CD4-positive, alpha-beta memory T cell (primary cell): ENCODE measurements at regions of chr11 and their contacts with region 1.

Region 1: GRCh38 chr11:96342961-96343711 is at the start of gene MAML2:
- DNase-seq: peak; percentile 84 to 96 (median 89)
- H3K4me3 ChIP-seq: peak within 1 kb of the TSS; percentile 60 to 78
- H3K4me3 Mint-ChIP-seq: peak within 1 kb of the TSS; percentile 91 to 98 (median 94)
- H3K27ac ChIP-seq: peak within 1 kb of the TSS; percentile 75
- H3K27ac Mint-ChIP-seq: peak within 1 kb of the TSS; percentile 86 to 97 (median 96)
- H3K4me1 ChIP-seq: peaks cover 34% of the 10 kb centered on the region
- H3K4me1 Mint-ChIP-seq: peaks cover 23 to 46% (median 30%) of the 10 kb centered on the region in 4 donors
- H3K27me3 ChIP-seq: no peaks in the 10 kb centered on the region
- H3K27me3 Mint-ChIP-seq: no peaks in the 10 kb centered on the region
- total RNA-seq, gene MAML2: 37.5 to 38.3 TPM

Region 2: GRCh38 chr11:95150946-95151684 is 1192.0 kb before region 1 on chr11:
- CTCF ChIA-PET with region 1: interaction called, 5 read pairs
- POLR2A ChIA-PET with region 1: no interaction called
- intact Hi-C with region 1: loop called (anchors 1 kb)
- DNase-seq: peak; percentile 91 to 93 (median 91)
- H3K4me3 ChIP-seq: peak overlapping the region; percentile 45 to 87
- H3K4me3 Mint-ChIP-seq: peak overlapping the region; percentile 85 to 96 (median 90)
- H3K27ac ChIP-seq: peak overlapping the region; percentile 80
- H3K27ac Mint-ChIP-seq: peak overlapping the region; percentile 90 to 99 (median 97)
- H3K4me1 ChIP-seq: peaks cover 35% of the 10 kb centered on the region
- H3K4me1 Mint-ChIP-seq: peaks cover 26 to 44% (median 36%) of the 10 kb centered on the region in 4 donors
- H3K27me3 ChIP-seq: no peaks in the 10 kb centered on the region
- H3K27me3 Mint-ChIP-seq: peaks cover 2 to 8% of the 10 kb centered on the region in 2 donors

Region 3: GRCh38 chr11:96045622-96046456 is 297.3 kb before region 1 on chr11:
- CTCF ChIA-PET with region 1: interaction called, 258 read pairs
- POLR2A ChIA-PET with region 1: no interaction called
- intact Hi-C with region 1: no loop called
- DNase-seq: no peak
- H3K4me3 ChIP-seq: no peak overlapping the region
- H3K4me3 Mint-ChIP-seq: no peak overlapping the region
- H3K27ac ChIP-seq: no peak overlapping the region
- H3K27ac Mint-ChIP-seq: peak overlapping the region in 1 of 7 donors; percentile 10
- H3K4me1 ChIP-seq: no peaks in the 10 kb centered on the region
- H3K4me1 Mint-ChIP-seq: peaks cover 17 to 42% (median 20%) of the 10 kb centered on the region in 4 donors
- H3K27me3 ChIP-seq: no peaks in the 10 kb centered on the region
- H3K27me3 Mint-ChIP-seq: no peaks in the 10 kb centered on the region

Region 4: DNA sequence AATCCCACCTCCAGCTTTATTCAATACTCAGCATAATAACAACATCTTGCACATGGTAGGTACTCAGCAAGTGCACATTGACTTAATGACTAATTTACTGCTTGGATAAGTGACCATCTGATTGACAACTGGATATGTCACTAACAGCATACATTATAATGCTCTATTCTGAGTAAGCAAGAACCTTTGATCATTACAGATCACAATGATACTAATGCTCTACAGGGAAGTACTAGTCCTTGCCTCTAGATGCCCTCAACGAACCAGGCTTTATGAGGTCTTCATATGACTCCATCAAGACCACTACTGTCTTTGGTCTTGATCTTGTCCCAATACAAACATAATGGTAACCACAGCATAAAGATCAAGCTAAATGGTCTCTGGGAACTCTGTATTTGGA is 251.7 kb before region 1 on chr11:
- CTCF ChIA-PET with region 1: interaction called, 176 read pairs
- POLR2A ChIA-PET with region 1: interaction called, 37 read pairs
- intact Hi-C with region 1: loop called (anchors 1 kb)
- DNase-seq: peak; percentile 34 to 54 (median 43)
- H3K4me3 ChIP-seq: no peak overlapping the region
- H3K4me3 Mint-ChIP-seq: peak overlapping the region in 4 of 8 donors; percentile 24 to 75 (median 32)
- H3K27ac ChIP-seq: no peak overlapping the region
- H3K27ac Mint-ChIP-seq: peak overlapping the region in 3 of 7 donors; percentile 23 to 43 (median 40)
- H3K4me1 ChIP-seq: peaks cover 32% of the 10 kb centered on the region
- H3K4me1 Mint-ChIP-seq: peaks cover 32 to 79% (median 61%) of the 10 kb centered on the region in 4 donors
- H3K27me3 ChIP-seq: no peaks in the 10 kb centered on the region
- H3K27me3 Mint-ChIP-seq: no peaks in the 10 kb centered on the region

Region 5: DNA sequence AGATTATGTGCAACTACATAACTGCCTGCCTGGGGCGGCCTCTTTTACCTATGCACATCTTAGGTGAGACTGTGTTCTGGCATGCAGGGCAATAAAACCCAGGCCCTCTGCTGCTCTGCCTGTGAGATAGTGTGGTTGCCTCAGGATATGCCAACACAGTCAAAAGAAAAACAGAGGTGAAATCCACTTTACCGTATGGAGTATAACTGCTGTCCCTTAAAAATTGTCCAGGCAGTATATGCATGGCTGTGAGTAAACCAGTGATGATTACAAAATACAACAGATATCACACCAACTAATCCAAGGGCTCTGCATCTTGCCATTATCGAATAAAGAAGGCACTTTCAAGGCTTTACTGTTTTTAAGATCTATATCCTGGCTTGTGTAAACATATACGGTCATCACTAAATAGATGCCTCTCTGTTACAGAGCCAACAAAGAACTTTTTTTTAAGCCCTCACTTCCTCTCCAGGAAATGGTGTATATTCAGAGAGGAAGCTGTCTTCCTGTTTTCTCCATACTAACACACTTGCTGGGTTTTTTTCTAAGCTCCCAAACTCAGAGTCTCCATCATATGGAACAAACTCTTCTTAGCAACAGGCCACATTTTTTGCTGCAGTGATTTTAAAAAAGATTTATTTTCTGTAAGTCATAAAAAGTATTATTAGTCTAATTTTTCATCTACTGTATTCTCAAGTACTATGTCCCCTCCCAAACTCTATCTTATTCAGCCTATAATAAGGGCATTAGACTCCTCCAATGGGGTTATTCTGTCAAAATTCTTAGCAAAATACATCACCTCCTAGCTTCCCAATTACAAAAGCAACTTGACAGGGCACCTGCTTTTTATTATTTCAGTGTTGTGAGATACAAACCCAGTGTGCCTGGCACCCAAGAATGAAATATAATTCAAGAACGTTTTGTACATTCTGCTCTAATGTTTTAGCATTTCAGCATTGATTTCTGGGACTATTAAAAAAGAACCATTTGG is 135.4 kb before region 1 on chr11:
- CTCF ChIA-PET with region 1: interaction called, 41 read pairs
- POLR2A ChIA-PET with region 1: interaction called, 56 read pairs
- intact Hi-C with region 1: loop called (anchors 2 kb)
- DNase-seq: peak in 4 of 5 donors; percentile 52 to 62 (median 56)
- H3K4me3 ChIP-seq: peak overlapping the region in 1 of 2 donors; percentile 16
- H3K4me3 Mint-ChIP-seq: peak overlapping the region; percentile 31 to 89 (median 70)
- H3K27ac ChIP-seq: peak overlapping the region; percentile 39
- H3K27ac Mint-ChIP-seq: peak overlapping the region; percentile 80 to 97 (median 90)
- H3K4me1 ChIP-seq: peaks cover 97% of the 10 kb centered on the region
- H3K4me1 Mint-ChIP-seq: peaks cover 62 to 92% (median 79%) of the 10 kb centered on the region in 4 donors
- H3K27me3 ChIP-seq: no peaks in the 10 kb centered on the region
- H3K27me3 Mint-ChIP-seq: no peaks in the 10 kb centered on the region

Region 6: DNA sequence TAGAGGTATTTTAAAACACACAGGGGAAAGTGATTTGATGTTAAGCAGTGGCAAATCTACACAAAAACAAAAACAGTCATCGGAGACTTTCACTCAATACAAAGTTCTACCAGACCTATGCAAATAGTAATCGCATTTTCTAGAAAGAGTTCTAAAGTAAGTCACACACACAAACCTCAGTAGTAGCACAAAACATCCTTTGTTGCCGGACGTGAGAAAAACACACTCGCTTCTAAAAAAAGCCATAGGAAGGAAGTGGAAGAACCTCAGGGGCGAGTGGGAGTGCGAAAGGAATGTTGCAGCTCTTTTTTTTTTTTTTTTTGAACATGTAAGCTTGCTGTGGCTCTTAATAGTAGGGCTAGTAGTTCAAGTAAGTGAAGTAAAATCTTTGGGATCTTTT is 89.0 kb before region 1 on chr11:
- CTCF ChIA-PET with region 1: interaction called, 81 read pairs
- POLR2A ChIA-PET with region 1: interaction called, 76 read pairs
- intact Hi-C with region 1: loop called (anchors 1 kb)
- DNase-seq: peak; percentile 28 to 50 (median 47)
- H3K4me3 ChIP-seq: peak overlapping the region in 1 of 2 donors; percentile 36
- H3K4me3 Mint-ChIP-seq: peak overlapping the region; percentile 69 to 92 (median 84)
- H3K27ac ChIP-seq: peak overlapping the region; percentile 8
- H3K27ac Mint-ChIP-seq: peak overlapping the region; percentile 73 to 97 (median 91)
- H3K4me1 ChIP-seq: peaks cover 75% of the 10 kb centered on the region
- H3K4me1 Mint-ChIP-seq: peaks cover 68 to 94% (median 83%) of the 10 kb centered on the region in 4 donors
- H3K27me3 ChIP-seq: no peaks in the 10 kb centered on the region
- H3K27me3 Mint-ChIP-seq: no peaks in the 10 kb centered on the region

Region 7: DNA sequence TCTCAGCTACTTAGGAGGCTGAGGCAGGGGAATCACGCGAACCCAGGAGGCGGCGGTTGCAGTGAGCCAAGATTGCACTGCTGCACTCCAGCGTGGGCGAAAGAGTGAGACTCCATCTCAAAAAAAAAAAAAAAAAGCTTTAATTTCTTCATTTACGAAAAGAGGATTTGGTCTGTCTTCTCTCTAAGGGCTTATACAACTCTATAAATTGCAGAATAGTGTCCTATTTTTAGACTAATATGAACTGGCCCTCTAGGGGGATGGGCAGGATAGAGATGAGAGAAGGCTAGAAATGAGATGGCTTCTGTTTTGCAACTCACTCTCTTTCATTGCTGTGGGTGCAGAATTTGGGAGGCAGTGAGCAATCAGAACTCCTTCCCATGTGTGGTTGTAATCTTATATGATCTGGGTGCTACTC is 11.4 kb before region 1 on chr11:
- CTCF ChIA-PET with region 1: interaction called, 37 read pairs
- POLR2A ChIA-PET with region 1: interaction called, 4 read pairs
- intact Hi-C with region 1: no loop called
- DNase-seq: no peak
- H3K4me3 ChIP-seq: no peak overlapping the region
- H3K4me3 Mint-ChIP-seq: peak overlapping the region in 4 of 8 donors; percentile 16 to 37 (median 30)
- H3K27ac ChIP-seq: no peak overlapping the region
- H3K27ac Mint-ChIP-seq: peak overlapping the region in 1 of 7 donors; percentile 17
- H3K4me1 ChIP-seq: peaks cover 75% of the 10 kb centered on the region
- H3K4me1 Mint-ChIP-seq: peaks cover 51 to 83% (median 69%) of the 10 kb centered on the region in 4 donors
- H3K27me3 ChIP-seq: no peaks in the 10 kb centered on the region
- H3K27me3 Mint-ChIP-seq: no peaks in the 10 kb centered on the region

Region 8: GRCh38 chr11:96506953-96507354 is 163.8 kb after region 1 on chr11:
- CTCF ChIA-PET with region 1: no interaction called
- POLR2A ChIA-PET with region 1: no interaction called
- intact Hi-C with region 1: no loop called
- DNase-seq: no peak
- H3K4me3 ChIP-seq: no peak overlapping the region
- H3K4me3 Mint-ChIP-seq: no peak overlapping the region
- H3K27ac ChIP-seq: no peak overlapping the region
- H3K27ac Mint-ChIP-seq: no peak overlapping the region
- H3K4me1 ChIP-seq: no peaks in the 10 kb centered on the region
- H3K4me1 Mint-ChIP-seq: no peaks in the 10 kb centered on the region
- H3K27me3 ChIP-seq: no peaks in the 10 kb centered on the region
- H3K27me3 Mint-ChIP-seq: no peaks in the 10 kb centered on the region

Region 9: DNA sequence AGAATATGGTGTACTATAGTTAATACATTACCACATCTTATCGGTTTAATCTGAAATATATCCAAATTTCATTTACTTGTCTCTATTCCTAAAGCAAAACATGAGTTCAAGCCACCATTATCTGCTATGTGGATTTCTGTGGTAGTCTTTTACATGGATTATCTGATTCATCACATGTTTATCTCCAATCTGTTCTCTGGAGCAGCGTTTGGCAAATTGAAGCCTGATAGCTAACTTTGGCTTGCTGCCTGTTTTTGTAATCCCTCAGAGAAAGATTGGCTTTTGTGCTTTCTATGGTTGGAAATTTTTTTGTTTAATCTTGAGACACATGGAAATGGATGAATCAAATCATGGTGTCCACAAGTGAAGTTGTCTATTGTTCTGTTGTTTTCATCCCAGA is 321.0 kb after region 1 on chr11:
- CTCF ChIA-PET with region 1: no interaction called
- POLR2A ChIA-PET with region 1: no interaction called
- intact Hi-C with region 1: no loop called
- DNase-seq: no peak
- H3K4me3 ChIP-seq: no peak overlapping the region
- H3K4me3 Mint-ChIP-seq: no peak overlapping the region
- H3K27ac ChIP-seq: no peak overlapping the region
- H3K27ac Mint-ChIP-seq: no peak overlapping the region
- H3K4me1 ChIP-seq: no peaks in the 10 kb centered on the region
- H3K4me1 Mint-ChIP-seq: no peaks in the 10 kb centered on the region
- H3K27me3 ChIP-seq: no peaks in the 10 kb centered on the region
- H3K27me3 Mint-ChIP-seq: no peaks in the 10 kb centered on the region